Mammary epithelial cell (primary cell): ENCODE measurements at regions of chr19 and their contacts with region 1.

Region 1: GRCh38 chr19:1992759-1993260 is 22.7 kb downstream of the BTBD2 start:
- DNase-seq: no peak
- H3K4me3 ChIP-seq: no peak overlapping the region
- H3K27ac ChIP-seq: no peak overlapping the region
- H3K4me1 ChIP-seq: no peaks in the 10 kb centered on the region
- H3K27me3 ChIP-seq: no peaks in the 10 kb centered on the region
- CTCF ChIP-seq: no peak

Region 2: GRCh38 chr19:1875646-1876495 is 116.9 kb before region 1 on chr19:
- CTCF ChIA-PET with region 1: no interaction called
- dilution Hi-C with region 1: loop called (anchors 5 kb)
- in situ Hi-C with region 1: no loop called
- intact Hi-C with region 1: no loop called
- DNase-seq: peak; percentile 86
- H3K4me3 ChIP-seq: peak overlapping the region; percentile 76 to 100 (median 88)
- H3K27ac ChIP-seq: peak overlapping the region; percentile 73
- H3K4me1 ChIP-seq: peaks cover 28% of the 10 kb centered on the region
- H3K27me3 ChIP-seq: no peaks in the 10 kb centered on the region
- CTCF ChIP-seq: no peak

Region 3: DNA sequence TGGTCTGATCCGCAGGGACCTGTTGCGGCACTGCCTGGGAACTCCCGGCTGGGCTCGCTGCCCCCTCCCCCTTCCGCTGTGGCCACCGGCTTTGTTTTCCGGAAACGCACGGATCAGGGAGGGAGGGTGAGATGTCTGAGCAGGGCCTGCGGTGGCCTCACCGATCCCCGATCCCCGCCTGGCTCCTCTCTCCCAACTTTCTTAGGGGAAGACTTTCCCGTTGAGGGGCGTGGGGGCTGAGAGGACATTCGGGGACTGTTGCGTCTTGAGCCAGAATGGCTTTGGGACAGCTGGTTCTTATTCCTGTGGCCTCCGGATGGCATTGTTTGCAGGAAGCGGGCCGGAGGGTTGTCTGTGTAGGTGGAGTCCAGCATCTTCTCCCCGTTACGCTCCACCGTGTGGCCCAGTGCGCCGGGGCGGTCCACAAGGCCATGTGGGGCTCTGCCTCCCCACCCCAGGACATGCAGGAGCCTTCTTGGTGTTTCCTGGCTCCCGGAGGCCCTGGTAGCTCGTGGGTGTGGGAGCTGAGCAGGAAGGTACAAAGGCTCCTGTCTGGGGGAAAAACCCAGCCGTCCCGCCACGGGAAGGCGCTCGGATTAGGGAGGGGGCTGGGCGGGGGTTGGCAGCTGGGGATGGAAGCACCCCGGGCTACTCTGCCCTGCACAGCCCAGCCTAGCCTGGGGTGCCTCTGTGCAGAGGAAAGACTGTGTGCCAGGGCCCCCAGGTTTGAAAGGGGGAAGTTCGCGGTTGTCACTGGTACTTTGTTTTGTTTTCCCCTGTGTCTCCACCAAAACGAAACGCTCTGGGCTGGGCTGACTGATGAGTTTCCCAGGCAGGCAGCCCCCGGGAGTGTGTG is 50.5 kb before region 1 on chr19:
- CTCF ChIA-PET with region 1: no interaction called
- dilution Hi-C with region 1: loop called (anchors 5 kb)
- in situ Hi-C with region 1: no loop called
- intact Hi-C with region 1: loop called (anchors 1 kb)
- DNase-seq: peak; percentile 77
- H3K4me3 ChIP-seq: peak overlapping the region; percentile 60 to 91 (median 86)
- H3K27ac ChIP-seq: peak overlapping the region; percentile 59
- H3K4me1 ChIP-seq: peaks cover 36% of the 10 kb centered on the region
- H3K27me3 ChIP-seq: no peaks in the 10 kb centered on the region
- CTCF ChIP-seq: no peak

Region 4: DNA sequence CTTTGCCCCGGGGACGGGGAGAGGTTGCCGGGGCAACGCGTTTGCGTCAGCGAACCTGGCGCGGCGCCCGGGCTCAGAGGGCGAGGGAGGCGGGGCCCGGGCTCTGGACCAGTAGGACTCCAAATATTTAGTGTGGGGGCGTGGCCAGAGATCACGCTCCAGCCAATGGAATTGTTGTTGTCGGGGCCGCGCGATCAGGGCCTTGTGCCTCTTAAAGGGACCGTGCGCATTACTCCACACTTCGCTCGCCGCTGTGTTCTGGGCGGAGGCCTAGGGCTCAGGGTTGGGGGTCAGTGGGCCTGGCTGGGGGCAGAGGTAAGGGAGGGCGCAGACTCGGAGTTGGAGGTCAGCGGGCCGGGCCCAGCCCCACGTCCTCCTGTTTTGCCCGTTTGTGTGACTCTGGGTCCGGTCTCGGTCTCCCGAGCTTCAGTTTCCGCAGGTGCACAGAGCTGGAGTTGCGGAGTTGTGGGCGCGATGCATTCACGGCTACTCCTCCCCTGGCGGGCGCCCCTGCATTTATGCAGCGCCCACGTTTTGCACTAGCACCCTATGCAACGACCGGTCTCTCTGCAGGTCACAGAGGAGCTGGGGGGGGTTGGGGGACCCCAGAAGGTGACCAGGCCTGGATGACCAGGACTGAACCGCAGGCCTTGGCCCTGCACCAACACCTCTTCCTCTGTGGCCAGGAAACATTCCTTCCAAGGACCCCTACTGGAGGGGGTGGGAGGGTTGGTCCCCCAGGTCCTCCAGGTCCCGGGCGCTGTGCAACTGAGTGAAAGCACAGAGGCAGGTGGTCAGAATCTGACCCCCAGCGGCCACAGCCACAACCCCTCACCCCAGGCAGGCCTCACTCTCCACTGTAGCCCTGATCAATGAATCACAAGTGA is 68.9 kb after region 1 on chr19:
- CTCF ChIA-PET with region 1: no interaction called
- dilution Hi-C with region 1: loop called (anchors 5 kb)
- in situ Hi-C with region 1: no loop called
- intact Hi-C with region 1: no loop called
- DNase-seq: peak; percentile 97
- H3K4me3 ChIP-seq: peak overlapping the region; percentile 54 to 70 (median 62)
- H3K27ac ChIP-seq: peak overlapping the region; percentile 88
- H3K4me1 ChIP-seq: peaks cover 59% of the 10 kb centered on the region
- H3K27me3 ChIP-seq: no peaks in the 10 kb centered on the region
- CTCF ChIP-seq: no peak

Region 5: DNA sequence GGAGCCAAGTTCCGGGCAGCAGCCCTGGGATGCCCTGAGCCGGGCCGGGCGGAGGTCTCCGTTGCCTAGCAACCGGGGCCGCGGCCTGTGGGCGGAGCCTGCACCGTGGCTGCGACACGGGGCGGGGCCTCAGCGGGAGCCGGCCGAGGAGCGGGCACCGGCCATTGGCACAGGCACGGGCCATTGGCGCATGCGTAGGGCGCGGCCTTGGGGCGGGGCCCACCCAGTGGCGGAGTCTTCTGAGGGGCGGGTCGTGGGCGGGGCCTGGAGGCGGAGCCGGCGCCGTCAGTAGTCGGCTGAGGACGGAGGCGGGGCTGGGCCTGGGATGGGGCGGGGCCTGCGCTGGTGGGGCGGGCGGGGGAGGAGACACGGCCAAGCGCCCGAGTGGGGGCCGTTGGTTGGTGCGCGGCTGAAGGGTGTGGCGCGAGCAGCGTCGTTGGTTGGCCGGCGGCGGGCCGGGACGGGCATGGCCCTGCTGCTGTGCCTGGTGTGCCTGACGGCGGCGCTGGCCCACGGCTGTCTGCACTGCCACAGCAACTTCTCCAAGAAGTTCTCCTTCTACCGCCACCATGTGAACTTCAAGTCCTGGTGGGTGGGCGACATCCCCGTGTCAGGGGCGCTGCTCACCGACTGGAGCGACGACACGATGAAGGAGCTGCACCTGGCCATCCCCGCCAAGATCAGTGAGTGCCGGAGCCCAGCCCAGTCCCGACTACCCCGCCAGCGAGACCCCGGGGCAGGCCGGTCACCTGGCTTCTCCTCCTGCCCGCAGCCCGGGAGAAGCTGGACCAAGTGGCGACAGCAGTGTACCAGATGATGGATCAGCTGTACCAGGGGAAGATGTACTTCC is 103.9 kb after region 1 on chr19 and contains the start of gene IZUMO4:
- CTCF ChIA-PET with region 1: no interaction called
- dilution Hi-C with region 1: no loop called
- in situ Hi-C with region 1: no loop called
- intact Hi-C with region 1: no loop called
- DNase-seq: peak; percentile 95
- H3K4me3 ChIP-seq: peak within 1 kb of the TSS; percentile 85 to 96 (median 86)
- H3K27ac ChIP-seq: peak within 1 kb of the TSS; percentile 82
- H3K4me1 ChIP-seq: peaks cover 37% of the 10 kb centered on the region
- H3K27me3 ChIP-seq: no peaks in the 10 kb centered on the region
- CTCF ChIP-seq: peak; percentile 13 to 55
- total RNA-seq, gene IZUMO4: 1.2 to 11.2 TPM

Region 6: GRCh38 chr19:2213799-2214198 is 221.0 kb after region 1 on chr19:
- CTCF ChIA-PET with region 1: no interaction called
- dilution Hi-C with region 1: loop called (anchors 5 kb)
- in situ Hi-C with region 1: no loop called
- intact Hi-C with region 1: no loop called
- DNase-seq: no peak
- H3K4me3 ChIP-seq: no peak overlapping the region
- H3K27ac ChIP-seq: no peak overlapping the region
- H3K4me1 ChIP-seq: no peaks in the 10 kb centered on the region
- H3K27me3 ChIP-seq: no peaks in the 10 kb centered on the region
- CTCF ChIP-seq: no peak

Region 7: DNA sequence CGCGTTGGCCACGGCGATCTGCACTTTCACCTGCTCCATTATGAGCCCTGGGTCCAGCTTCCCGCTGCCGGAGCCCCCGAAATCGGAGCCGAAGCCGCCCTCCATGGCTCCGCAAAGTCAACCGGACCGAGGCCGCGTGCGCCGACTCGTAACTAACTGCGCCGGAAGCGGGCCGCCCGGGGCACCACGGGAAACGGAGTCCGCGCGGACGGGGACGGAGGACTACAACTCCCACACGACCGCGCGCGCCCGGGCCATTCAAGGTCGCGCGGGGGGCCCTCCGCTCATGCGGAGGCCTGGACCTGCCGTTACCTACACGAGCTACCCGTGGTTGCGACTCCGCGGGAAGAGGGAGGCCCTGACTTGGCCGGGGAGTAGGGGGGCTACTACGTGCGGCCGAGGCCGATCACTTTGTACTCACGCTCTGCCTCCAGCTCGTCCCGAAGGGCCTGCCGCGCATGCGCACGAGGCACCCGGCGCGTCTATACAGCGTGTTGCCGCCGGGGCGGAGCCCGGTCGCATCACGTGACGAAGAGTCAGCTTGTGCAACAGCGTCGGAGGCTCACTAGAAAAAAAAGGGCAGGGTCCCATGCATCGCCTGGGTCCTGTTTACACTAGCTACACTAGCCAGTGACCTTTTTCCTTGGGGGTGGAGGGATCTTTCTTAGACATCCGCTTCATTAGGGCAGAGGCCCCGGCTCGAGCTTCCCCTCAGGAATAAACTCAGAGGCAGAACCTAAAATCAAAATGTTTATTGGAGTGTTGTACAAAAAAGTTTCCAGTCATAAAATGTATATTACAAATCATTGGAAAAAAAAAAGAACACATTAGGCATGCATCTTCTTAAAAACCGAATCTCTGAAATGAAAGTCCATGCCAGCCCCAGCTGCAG is 434.9 kb after region 1 on chr19 and contains the start of gene TIMM13:
- CTCF ChIA-PET with region 1: no interaction called
- dilution Hi-C with region 1: loop called (anchors 10 kb)
- in situ Hi-C with region 1: no loop called
- intact Hi-C with region 1: no loop called
- DNase-seq: peak; percentile 92
- H3K4me3 ChIP-seq: peak within 1 kb of the TSS; percentile 53 to 99 (median 77)
- H3K27ac ChIP-seq: peak within 1 kb of the TSS; percentile 74
- H3K4me1 ChIP-seq: peaks cover 23% of the 10 kb centered on the region
- H3K27me3 ChIP-seq: no peaks in the 10 kb centered on the region
- CTCF ChIP-seq: no peak
- total RNA-seq, gene TIMM13: 20.8 to 133 TPM